B cell (primary cell): ENCODE measurements at regions of chr6 and their contacts with region 1.

Region 1: GRCh38 chr6:5684320-5685053 is 322.2 kb downstream of the NRN1 start:
- DNase-seq: no peak
- ATAC-seq: no peak
- H3K4me3 ChIP-seq: no peak overlapping the region
- H3K4me3 Mint-ChIP-seq: no peak overlapping the region
- H3K27ac ChIP-seq: no peak overlapping the region
- H3K27ac Mint-ChIP-seq: no peak overlapping the region
- H3K4me1 ChIP-seq: peaks cover 23 to 24% of the 10 kb centered on the region in 2 donors
- H3K4me1 Mint-ChIP-seq: peaks cover 24% of the 10 kb centered on the region
- H3K27me3 ChIP-seq: no peaks in the 10 kb centered on the region
- H3K27me3 Mint-ChIP-seq: no peaks in the 10 kb centered on the region
- CTCF ChIP-seq: no peak

Region 2: GRCh38 chr6:5670811-5671561 is 13.5 kb before region 1 on chr6:
- CTCF ChIA-PET with region 1: interaction called, 3 read pairs
- POLR2A ChIA-PET with region 1: interaction called, 14 read pairs
- intact Hi-C with region 1: no loop called
- DNase-seq: peak; percentile 48
- ATAC-seq: peak; percentile 57
- H3K4me3 ChIP-seq: no peak overlapping the region
- H3K4me3 Mint-ChIP-seq: peak overlapping the region; percentile 1
- H3K27ac ChIP-seq: peak overlapping the region in 1 of 2 donors; percentile 28
- H3K27ac Mint-ChIP-seq: peak overlapping the region; percentile 72
- H3K4me1 ChIP-seq: peaks cover 16 to 26% of the 10 kb centered on the region in 2 donors
- H3K4me1 Mint-ChIP-seq: peaks cover 37% of the 10 kb centered on the region
- H3K27me3 ChIP-seq: no peaks in the 10 kb centered on the region
- H3K27me3 Mint-ChIP-seq: no peaks in the 10 kb centered on the region
- CTCF ChIP-seq: no peak

Region 3: DNA sequence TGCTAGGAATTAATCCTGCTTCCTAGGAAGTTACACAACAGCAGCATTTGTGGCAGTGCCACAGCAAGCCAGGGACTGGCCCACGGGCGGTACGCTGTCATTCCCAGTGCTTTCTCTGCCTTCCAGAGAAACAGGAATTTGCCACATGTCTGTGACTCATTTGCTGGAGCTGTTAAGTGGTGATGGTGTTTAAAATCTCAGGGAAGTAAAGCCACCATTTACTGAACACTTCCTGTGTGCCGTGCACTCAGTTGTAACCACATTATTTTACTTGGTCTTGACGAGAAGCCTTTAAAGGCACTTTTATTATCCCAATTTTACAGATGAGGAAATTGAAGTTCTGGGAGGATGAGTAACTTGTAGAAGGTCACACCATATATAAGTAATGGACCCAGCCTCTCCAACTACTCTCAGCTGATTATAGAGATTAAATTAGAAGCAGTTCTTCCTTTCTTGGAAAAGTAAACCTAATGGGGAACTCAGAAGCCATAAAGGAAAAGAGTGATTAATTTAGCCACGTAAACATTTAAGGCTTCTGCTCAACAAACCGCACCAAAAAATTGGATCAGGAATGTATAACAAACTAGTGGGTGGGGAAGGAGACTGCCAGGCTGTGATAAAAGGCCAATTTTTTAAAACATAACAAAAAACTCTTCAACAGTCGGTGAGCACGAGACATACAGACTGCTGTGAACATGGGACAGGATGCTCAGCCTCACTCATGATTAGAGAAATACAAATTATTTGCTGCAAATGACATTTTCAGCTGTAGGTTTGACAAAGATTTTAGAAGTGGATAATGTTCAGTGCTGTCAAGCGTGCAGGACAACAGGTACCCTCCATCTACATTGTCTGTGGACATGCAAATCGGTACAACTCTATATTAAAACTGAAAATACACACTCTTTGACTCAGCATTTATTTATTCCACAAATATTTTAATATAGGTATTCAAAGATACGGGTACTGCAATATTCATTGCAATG is 11.1 kb after region 1 on chr6:
- CTCF ChIA-PET with region 1: interaction called, 4 read pairs
- POLR2A ChIA-PET with region 1: no interaction called
- intact Hi-C with region 1: loop called (anchors 2 kb)
- DNase-seq: no peak
- ATAC-seq: no peak
- H3K4me3 ChIP-seq: no peak overlapping the region
- H3K4me3 Mint-ChIP-seq: peak overlapping the region; percentile 60
- H3K27ac ChIP-seq: peak overlapping the region in 1 of 2 donors; percentile 33
- H3K27ac Mint-ChIP-seq: peak overlapping the region; percentile 67
- H3K4me1 ChIP-seq: peaks cover 22 to 31% of the 10 kb centered on the region in 2 donors
- H3K4me1 Mint-ChIP-seq: peaks cover 37% of the 10 kb centered on the region
- H3K27me3 ChIP-seq: no peaks in the 10 kb centered on the region
- H3K27me3 Mint-ChIP-seq: no peaks in the 10 kb centered on the region
- CTCF ChIP-seq: no peak